HepG2 (cell line): ENCODE measurements at regions of chr11 and their contacts with region 1.

Region 1: GRCh38 chr11:68869251-68869960 is 27.7 kb upstream of the CPT1A start:
- DNase-seq: peak; percentile 46
- ATAC-seq: peak; percentile 83
- H3K4me3 ChIP-seq: peak overlapping the region; percentile 27 to 50 (median 43); a peak in 5 of 6 replicates
- H3K27ac ChIP-seq: no peak overlapping the region
- H3K4me1 ChIP-seq: peaks cover 34% of the 10 kb centered on the region; the same call in 1 of the 2 replicates
- H3K27me3 ChIP-seq: peaks cover 2 to 26% of the 10 kb centered on the region in 2 experiments; a peak in 3 of 5 replicates
- CTCF ChIP-seq: peak; percentile 78
- EP300 ChIP-seq: no peak
- POLR2A ChIP-seq: no peak
- RAD21 ChIP-seq: no peak

Region 2: DNA sequence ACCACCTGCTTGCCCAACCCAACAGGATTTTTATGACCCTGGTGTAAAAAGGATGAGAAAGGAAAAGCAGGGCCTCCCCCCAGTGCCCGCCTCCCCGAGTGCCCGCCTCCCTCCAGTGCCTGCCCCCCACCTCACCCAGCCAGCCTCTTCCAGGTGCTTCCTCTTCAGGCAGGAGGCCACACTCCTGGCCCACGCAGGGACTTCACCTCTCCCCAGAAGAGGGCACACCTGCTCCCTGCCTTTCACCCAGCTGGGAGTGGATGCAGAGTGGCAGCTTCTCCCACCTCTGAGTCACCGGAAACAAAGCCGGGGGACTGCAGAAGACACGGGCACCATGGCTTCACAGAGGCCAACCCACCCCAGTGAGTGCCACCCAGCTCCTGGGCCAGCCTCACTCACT is 43.8 kb before region 1 on chr11:
- CTCF ChIA-PET with region 1: interaction called, 10 read pairs
- POLR2A ChIA-PET with region 1: no interaction called
- in situ Hi-C with region 1: no loop called
- intact Hi-C with region 1: no loop called
- DNase-seq: peak; percentile 58
- ATAC-seq: peak; percentile 90
- H3K4me3 ChIP-seq: no peak overlapping the region
- H3K27ac ChIP-seq: no peak overlapping the region
- H3K4me1 ChIP-seq: no peaks in the 10 kb centered on the region
- H3K27me3 ChIP-seq: no peaks in the 10 kb centered on the region; a peak in 1 of 5 replicates
- CTCF ChIP-seq: peak; percentile 81
- EP300 ChIP-seq: no peak
- POLR2A ChIP-seq: no peak
- RAD21 ChIP-seq: peak; percentile 65

Region 3: DNA sequence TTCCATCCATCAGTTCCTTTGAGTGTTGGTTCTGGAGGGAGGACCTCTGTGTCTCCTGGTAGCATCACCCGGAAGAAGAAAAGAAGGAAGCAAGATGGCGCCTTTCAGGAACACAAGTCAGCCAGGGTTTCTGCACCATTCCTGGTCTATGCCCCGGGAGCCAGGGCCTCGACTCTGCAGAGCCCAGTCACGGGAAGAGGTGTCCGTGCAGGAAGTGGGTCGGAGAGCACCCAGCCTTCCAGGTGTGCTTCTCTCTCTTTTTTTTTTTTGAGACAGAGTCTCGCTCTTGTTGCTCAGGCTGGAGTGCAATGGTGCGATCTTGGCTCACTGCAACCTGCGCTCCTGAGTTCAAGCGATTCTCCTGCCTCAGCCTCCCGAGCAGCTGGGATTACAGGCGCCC is 13.0 kb after region 1 on chr11:
- CTCF ChIA-PET with region 1: no interaction called
- POLR2A ChIA-PET with region 1: no interaction called
- in situ Hi-C with region 1: no loop called
- intact Hi-C with region 1: loop called (anchors 1 kb)
- DNase-seq: no peak
- ATAC-seq: no peak
- H3K4me3 ChIP-seq: no peak overlapping the region
- H3K27ac ChIP-seq: no peak overlapping the region
- H3K4me1 ChIP-seq: peaks cover 9% of the 10 kb centered on the region
- H3K27me3 ChIP-seq: no peaks in the 10 kb centered on the region
- CTCF ChIP-seq: no peak
- EP300 ChIP-seq: no peak
- POLR2A ChIP-seq: no peak
- RAD21 ChIP-seq: no peak

Region 4: GRCh38 chr11:68933605-68934320 is 64.4 kb after region 1 on chr11:
- CTCF ChIA-PET with region 1: no interaction called
- POLR2A ChIA-PET with region 1: no interaction called
- in situ Hi-C with region 1: no loop called
- intact Hi-C with region 1: no loop called
- DNase-seq: no peak
- ATAC-seq: no peak
- H3K4me3 ChIP-seq: no peak overlapping the region
- H3K27ac ChIP-seq: no peak overlapping the region
- H3K4me1 ChIP-seq: no peaks in the 10 kb centered on the region
- H3K27me3 ChIP-seq: no peaks in the 10 kb centered on the region; a peak in 1 of 5 replicates
- CTCF ChIP-seq: no peak
- EP300 ChIP-seq: no peak
- POLR2A ChIP-seq: no peak
- RAD21 ChIP-seq: no peak

Region 5: DNA sequence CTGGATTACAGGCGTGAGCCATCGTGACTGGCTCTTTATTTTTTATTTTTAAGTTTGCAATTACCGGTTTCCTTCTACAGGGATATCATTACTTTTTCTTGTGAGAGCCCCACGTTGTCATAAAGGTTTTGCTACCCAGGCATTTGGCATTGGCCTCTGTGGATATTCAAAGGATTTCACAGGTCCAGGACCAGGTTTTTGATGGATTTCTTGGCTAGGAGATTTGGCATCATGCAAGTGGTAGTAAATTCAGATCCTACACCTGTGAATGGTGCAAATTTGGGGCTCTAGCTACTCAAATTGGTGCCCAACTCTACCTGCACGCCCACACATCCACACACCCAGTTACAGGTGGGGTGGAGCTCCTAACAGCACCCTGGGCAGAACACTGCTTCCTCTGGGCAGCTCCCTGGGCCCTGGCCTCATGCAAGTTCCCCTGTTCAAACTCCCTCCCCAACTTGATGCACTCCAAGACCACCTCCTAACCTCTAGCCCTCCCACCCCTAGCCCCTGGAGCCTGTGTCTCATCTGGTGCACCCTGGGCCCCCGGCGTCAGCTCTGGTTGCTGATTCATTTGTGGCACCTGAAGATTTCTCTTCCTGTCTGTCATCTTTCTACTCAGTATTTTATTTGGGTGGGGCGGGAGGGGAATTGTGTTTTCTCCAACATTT is 120.7 kb after region 1 on chr11:
- CTCF ChIA-PET with region 1: no interaction called
- POLR2A ChIA-PET with region 1: no interaction called
- in situ Hi-C with region 1: no loop called
- intact Hi-C with region 1: no loop called
- DNase-seq: no peak
- ATAC-seq: no peak
- H3K4me3 ChIP-seq: no peak overlapping the region
- H3K27ac ChIP-seq: no peak overlapping the region
- H3K4me1 ChIP-seq: no peaks in the 10 kb centered on the region
- H3K27me3 ChIP-seq: peaks cover 3 to 25% of the 10 kb centered on the region in 2 experiments; a peak in 4 of 5 replicates
- CTCF ChIP-seq: no peak
- EP300 ChIP-seq: no peak
- POLR2A ChIP-seq: no peak
- RAD21 ChIP-seq: no peak